WTC11 (cell line): ENCODE measurements at regions of chr2 and their contacts with region 1.

Region 1: GRCh38 chr2:102753563-102754159 is 8.2 kb upstream of the TMEM182 start:
- DNase-seq: no peak
- ATAC-seq: peak; percentile 39; the same call in 1 of the 2 replicates
- H3K4me3 Mint-ChIP-seq: no peak overlapping the region
- H3K27ac Mint-ChIP-seq: no peak overlapping the region
- H3K4me1 Mint-ChIP-seq: peaks cover 9% of the 10 kb centered on the region
- H3K27me3 Mint-ChIP-seq: no peaks in the 10 kb centered on the region
- CTCF ChIP-seq: peak; percentile 61

Region 2: DNA sequence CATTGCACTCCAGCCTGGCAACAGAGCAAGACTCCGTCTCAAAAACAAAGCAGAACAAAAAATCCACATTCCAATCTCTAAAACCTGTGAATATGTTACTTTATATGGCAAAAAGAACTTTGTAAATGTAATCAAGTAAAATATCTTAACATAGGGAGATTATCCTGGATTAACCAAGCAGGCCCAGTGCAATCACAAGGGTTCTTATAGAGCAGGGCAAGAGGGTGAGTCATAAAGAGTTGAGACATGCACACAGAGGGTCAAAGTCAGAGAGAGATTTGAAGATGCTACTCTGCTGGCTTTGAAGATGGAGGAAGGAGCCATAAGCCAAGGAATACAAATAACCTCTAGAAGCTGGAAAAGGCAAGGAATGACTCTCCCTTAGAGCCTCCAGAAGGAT is 195.2 kb before region 1 on chr2:
- CTCF ChIA-PET with region 1: no interaction called
- POLR2A ChIA-PET with region 1: no interaction called
- DNase-seq: no peak
- ATAC-seq: no peak
- H3K4me3 Mint-ChIP-seq: no peak overlapping the region
- H3K27ac Mint-ChIP-seq: no peak overlapping the region
- H3K4me1 Mint-ChIP-seq: no peaks in the 10 kb centered on the region
- H3K27me3 Mint-ChIP-seq: no peaks in the 10 kb centered on the region
- CTCF ChIP-seq: no peak

Region 3: DNA sequence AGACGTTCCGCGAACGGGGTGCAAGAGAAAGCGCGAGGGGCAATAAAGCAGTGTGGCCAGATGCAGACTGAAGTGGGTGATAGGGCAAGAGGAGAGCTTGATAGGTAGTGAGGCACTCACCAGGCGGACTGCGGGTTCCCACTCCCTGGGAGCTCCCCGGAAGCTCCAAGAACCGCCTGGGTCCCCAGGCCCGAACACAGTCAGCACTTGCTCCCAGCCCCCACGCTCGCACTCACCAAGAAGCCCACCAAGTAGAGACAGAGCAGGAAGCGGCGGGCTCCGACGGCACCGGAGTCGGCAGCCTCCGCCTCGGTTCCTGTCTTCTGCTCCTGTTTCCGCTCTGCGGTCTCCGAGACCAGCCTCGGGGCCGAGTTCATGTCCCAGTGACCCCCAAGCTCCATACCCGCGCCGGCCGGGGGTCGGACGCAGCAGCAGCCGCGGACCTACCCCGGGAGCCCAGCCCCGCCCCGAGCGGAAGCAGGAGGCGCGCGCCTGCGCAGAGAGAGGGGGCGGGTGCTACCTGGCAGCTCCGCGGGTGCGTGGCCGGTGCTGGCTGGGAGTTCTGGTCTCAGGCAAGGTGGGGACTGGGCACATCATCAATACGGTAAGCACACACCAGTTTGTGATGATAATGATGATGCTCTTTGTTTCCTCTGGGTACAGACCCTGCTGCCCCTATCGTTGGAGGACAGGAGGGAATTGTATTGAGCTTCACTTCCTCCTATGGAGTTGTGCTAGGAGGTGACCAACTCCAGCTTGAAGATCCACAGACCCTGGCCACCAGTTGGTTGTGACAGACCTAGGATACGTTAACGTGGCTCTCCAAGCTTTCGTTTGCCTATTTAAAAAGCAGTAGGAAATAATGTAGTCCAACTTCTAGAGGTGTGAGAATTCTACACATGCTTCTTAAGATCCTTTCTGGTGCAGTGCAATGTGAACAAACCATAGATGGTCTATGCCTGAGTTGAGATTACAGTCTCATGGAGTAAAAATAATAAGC is 17.0 kb before region 1 on chr2:
- CTCF ChIA-PET with region 1: interaction called, 43 read pairs
- POLR2A ChIA-PET with region 1: no interaction called
- DNase-seq: peak; percentile 88
- ATAC-seq: peak; percentile 93
- H3K4me3 Mint-ChIP-seq: peak overlapping the region; percentile 96
- H3K27ac Mint-ChIP-seq: peak overlapping the region; percentile 32; the same call in 1 of the 2 replicates
- H3K4me1 Mint-ChIP-seq: peaks cover 19% of the 10 kb centered on the region
- H3K27me3 Mint-ChIP-seq: no peaks in the 10 kb centered on the region
- CTCF ChIP-seq: no peak

Region 4: DNA sequence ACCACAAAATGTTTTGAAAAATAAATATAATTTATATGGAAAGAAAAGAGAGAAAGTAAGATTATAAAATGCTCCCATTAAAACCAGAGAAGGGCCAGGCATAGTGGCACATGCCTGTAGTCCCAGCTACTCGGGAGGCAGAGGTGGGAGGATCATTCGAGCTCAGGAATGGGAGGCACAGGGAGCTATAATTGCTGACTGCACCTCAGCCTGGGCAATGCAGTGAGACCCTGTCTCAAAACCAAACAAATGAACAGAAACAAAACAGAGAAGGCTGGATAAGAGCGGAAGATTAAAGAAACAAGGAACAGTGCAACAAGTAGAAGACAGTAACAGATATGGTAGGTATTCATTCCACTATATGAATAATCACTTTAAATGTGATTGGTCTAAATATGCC is 10.4 kb before region 1 on chr2:
- CTCF ChIA-PET with region 1: interaction called, 10 read pairs
- POLR2A ChIA-PET with region 1: no interaction called
- DNase-seq: no peak
- ATAC-seq: no peak
- H3K4me3 Mint-ChIP-seq: no peak overlapping the region
- H3K27ac Mint-ChIP-seq: no peak overlapping the region
- H3K4me1 Mint-ChIP-seq: no peaks in the 10 kb centered on the region
- H3K27me3 Mint-ChIP-seq: no peaks in the 10 kb centered on the region
- CTCF ChIP-seq: no peak

Region 5: GRCh38 chr2:102782933-102783332 is 29.3 kb after region 1 on chr2:
- CTCF ChIA-PET with region 1: interaction called, 20 read pairs
- POLR2A ChIA-PET with region 1: no interaction called
- DNase-seq: no peak
- ATAC-seq: no peak
- H3K4me3 Mint-ChIP-seq: no peak overlapping the region
- H3K27ac Mint-ChIP-seq: no peak overlapping the region; the same call in 1 of the 2 replicates
- H3K4me1 Mint-ChIP-seq: peaks cover 28% of the 10 kb centered on the region
- H3K27me3 Mint-ChIP-seq: no peaks in the 10 kb centered on the region
- CTCF ChIP-seq: no peak

Region 6: GRCh38 chr2:102806250-102806837 is 52.7 kb after region 1 on chr2:
- CTCF ChIA-PET with region 1: interaction called, 91 read pairs
- POLR2A ChIA-PET with region 1: no interaction called
- DNase-seq: peak; percentile 81
- ATAC-seq: peak; percentile 93
- H3K4me3 Mint-ChIP-seq: no peak overlapping the region
- H3K27ac Mint-ChIP-seq: no peak overlapping the region
- H3K4me1 Mint-ChIP-seq: no peaks in the 10 kb centered on the region
- H3K27me3 Mint-ChIP-seq: no peaks in the 10 kb centered on the region; the same call in 1 of the 2 replicates
- CTCF ChIP-seq: peak; percentile 54